ENCODE measurements at regions of chr20 and their contacts with region 1.

Region 1: GRCh38 chr20:9166153-9166780 is 97.4 kb downstream of the PLCB4 start:
- DNase-seq: no peak
- ATAC-seq: peak; percentile 38 to 79 (median 61)
- H3K4me3 ChIP-seq: peak overlapping the region in 9 of 12 donors; percentile 3 to 52 (median 33)
- H3K27ac ChIP-seq: peak overlapping the region in 8 of 12 donors; percentile 23 to 75 (median 66)
- H3K4me1 ChIP-seq: peaks cover 0 to 33% (median 11%) of the 10 kb centered on the region in 12 donors
- H3K27me3 ChIP-seq: no peaks in the 10 kb centered on the region
- CTCF ChIP-seq: no peak
- POLR2A ChIP-seq: no peak

Region 2: GRCh38 chr20:9129756-9130155 is 36.5 kb before region 1 on chr20:
- intact Hi-C with region 1: loop called in 1 of 10 experiments (anchors 5 kb)
- DNase-seq: no peak
- ATAC-seq: peak in 2 of 4 donors; percentile 55 to 56
- H3K4me3 ChIP-seq: no peak overlapping the region
- H3K27ac ChIP-seq: peak overlapping the region in 9 of 12 donors; percentile 12 to 67 (median 56)
- H3K4me1 ChIP-seq: peaks cover 0 to 42% (median 20%) of the 10 kb centered on the region in 12 donors
- H3K27me3 ChIP-seq: no peaks in the 10 kb centered on the region
- CTCF ChIP-seq: no peak
- POLR2A ChIP-seq: no peak

Measured in heart left ventricle (tissue), 16 donors.